HAP-1 (cell line): ENCODE measurements at regions of chr5 and their contacts with region 1.

Region 1: GRCh38 chr5:103774721-103775120 is 212.1 kb upstream of the NUDT12 start:
- DNase-seq: no peak
- H3K4me3 ChIP-seq: no peak overlapping the region
- H3K4me1 ChIP-seq: no peaks in the 10 kb centered on the region
- H3K27me3 ChIP-seq: no peaks in the 10 kb centered on the region

Region 2: DNA sequence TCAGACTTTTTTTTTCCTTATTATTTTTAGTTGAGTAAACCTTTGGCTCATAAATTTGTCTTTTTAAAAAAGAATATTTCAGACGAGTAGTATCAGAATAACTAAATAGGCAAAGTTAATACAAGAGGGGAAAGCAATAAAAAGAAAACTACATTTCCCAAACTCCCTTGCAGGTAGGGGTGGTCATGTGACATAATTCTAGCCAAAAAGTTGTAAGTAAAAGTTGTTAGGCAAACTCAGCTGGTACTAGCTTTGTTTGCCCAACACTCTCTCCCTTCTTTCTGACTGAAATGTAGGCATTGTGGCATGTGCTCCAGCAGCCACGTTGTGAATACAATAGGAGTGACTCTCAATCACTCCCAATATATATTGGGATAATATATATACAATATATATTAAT is 675.7 kb before region 1 on chr5:
- in situ Hi-C with region 1: no loop called
- DNase-seq: no peak
- H3K4me3 ChIP-seq: no peak overlapping the region
- H3K4me1 ChIP-seq: no peaks in the 10 kb centered on the region
- H3K27me3 ChIP-seq: no peaks in the 10 kb centered on the region

Region 3: GRCh38 chr5:103582364-103582763 is 192.4 kb before region 1 on chr5:
- in situ Hi-C with region 1: loop called (anchors 25 kb)
- DNase-seq: peak; percentile 63 to 72
- H3K4me3 ChIP-seq: no peak overlapping the region
- H3K4me1 ChIP-seq: peaks cover 13% of the 10 kb centered on the region
- H3K27me3 ChIP-seq: no peaks in the 10 kb centered on the region